Sigmoid colon (tissue), 7 donors: ENCODE measurements at regions of chr12 and their contacts with region 1.

Region 1: DNA sequence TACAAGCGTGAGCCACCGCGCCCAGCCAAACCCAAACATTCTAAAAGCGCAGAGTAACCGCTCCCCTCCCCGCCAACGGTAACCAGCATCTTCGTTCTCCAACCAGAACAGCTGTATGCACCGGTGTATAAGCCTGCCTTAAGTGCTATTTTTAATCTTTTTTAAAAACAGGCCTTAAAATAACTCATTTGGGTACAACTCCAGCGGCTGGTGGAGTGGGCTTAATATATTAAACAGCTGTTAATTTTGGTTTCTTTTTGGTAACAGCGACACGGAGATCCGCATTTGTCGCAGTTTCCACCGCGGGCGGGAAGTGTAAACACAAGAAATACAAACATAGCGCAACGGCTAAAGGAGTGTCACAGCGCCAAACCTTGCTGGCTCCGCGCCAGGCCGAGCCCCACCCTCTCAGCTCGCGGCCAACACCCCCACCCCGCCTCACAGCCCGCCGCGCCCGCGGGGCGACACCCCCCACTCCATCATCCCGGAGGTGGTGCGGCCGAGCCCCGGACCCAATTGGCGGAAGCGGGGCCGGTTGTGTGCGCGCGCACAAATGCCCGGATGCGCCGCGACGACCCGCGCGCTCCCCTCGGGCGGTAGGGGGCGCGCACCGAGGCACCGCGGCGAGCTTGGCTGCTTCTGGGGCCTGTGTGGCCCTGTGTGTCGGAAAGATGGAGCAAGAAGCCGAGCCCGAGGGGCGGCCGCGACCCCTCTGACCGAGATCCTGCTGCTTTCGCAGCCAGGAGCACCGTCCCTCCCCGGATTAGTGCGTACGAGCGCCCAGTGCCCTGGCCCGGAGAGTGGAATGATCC is at the start of gene MDM2:
- DNase-seq: peak; percentile 97
- H3K4me3 ChIP-seq: peak within 1 kb of the TSS; percentile 61 to 98 (median 86)
- H3K27ac ChIP-seq: peak within 1 kb of the TSS; percentile 92 to 100 (median 98)
- H3K4me1 ChIP-seq: peaks cover 0 to 33% (median 26%) of the 10 kb centered on the region in 4 donors
- H3K27me3 ChIP-seq: no peaks in the 10 kb centered on the region
- CTCF ChIP-seq: peak; percentile 77 to 82 (median 78)
- EP300 ChIP-seq: no peak
- POLR2A ChIP-seq: peak; percentile 90 to 92
- total RNA-seq, gene MDM2: 44.2 to 55.4 (median 47.8) TPM

Region 2: GRCh38 chr12:67268896-67269631 is 1538.7 kb before region 1 on chr12 and contains the start of gene CAND1:
- intact Hi-C with region 1: loop called (anchors 10 kb)
- DNase-seq: peak; percentile 99
- H3K4me3 ChIP-seq: peak within 1 kb of the TSS; percentile 78 to 96 (median 89)
- H3K27ac ChIP-seq: peak within 1 kb of the TSS; percentile 90 to 99 (median 99)
- H3K4me1 ChIP-seq: peaks cover 0 to 49% (median 42%) of the 10 kb centered on the region in 4 donors
- H3K27me3 ChIP-seq: no peaks in the 10 kb centered on the region
- CTCF ChIP-seq: no peak
- EP300 ChIP-seq: no peak
- POLR2A ChIP-seq: peak; percentile 52 to 61
- total RNA-seq, gene CAND1: 63.0 to 86.5 (median 77.2) TPM

Region 3: DNA sequence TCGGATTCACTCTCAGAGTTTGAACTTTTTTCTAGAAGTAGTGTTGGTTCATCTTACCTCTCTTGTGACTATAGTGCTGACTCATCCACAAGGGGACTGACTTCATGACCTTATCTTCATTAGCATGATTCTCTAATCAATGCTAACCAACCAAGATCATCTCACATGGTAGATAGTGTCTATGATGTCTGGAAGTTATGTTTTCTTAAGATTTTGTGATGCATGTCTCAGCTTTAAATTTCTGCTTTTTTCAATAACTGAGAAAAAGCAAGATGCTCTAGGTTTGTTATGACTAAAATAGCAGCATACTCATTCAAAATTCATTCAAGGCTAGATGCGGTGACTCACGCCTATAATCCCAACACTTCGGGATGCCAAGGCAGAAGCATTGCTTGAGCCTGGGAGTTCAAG is 74.1 kb before region 1 on chr12:
- intact Hi-C with region 1: no loop called
- DNase-seq: no peak
- H3K4me3 ChIP-seq: no peak overlapping the region
- H3K27ac ChIP-seq: no peak overlapping the region
- H3K4me1 ChIP-seq: no peaks in the 10 kb centered on the region
- H3K27me3 ChIP-seq: no peaks in the 10 kb centered on the region
- CTCF ChIP-seq: no peak
- EP300 ChIP-seq: no peak
- POLR2A ChIP-seq: no peak

Region 4: GRCh38 chr12:68745904-68746571 is 61.7 kb before region 1 on chr12 and contains the start of gene SLC35E3:
- intact Hi-C with region 1: loop called (anchors 1 kb)
- DNase-seq: peak; percentile 95
- H3K4me3 ChIP-seq: peak within 1 kb of the TSS; percentile 63 to 77 (median 66)
- H3K27ac ChIP-seq: peak within 1 kb of the TSS; percentile 79 to 83 (median 82)
- H3K4me1 ChIP-seq: peaks cover 0 to 21% (median 18%) of the 10 kb centered on the region in 4 donors
- H3K27me3 ChIP-seq: no peaks in the 10 kb centered on the region
- CTCF ChIP-seq: no peak
- EP300 ChIP-seq: no peak
- POLR2A ChIP-seq: peak; percentile 6 to 83
- total RNA-seq, gene SLC35E3: 1.1 to 5.3 (median 2.6) TPM